ENCODE measurements at regions of chr10 and their contacts with region 1.

Region 1: DNA sequence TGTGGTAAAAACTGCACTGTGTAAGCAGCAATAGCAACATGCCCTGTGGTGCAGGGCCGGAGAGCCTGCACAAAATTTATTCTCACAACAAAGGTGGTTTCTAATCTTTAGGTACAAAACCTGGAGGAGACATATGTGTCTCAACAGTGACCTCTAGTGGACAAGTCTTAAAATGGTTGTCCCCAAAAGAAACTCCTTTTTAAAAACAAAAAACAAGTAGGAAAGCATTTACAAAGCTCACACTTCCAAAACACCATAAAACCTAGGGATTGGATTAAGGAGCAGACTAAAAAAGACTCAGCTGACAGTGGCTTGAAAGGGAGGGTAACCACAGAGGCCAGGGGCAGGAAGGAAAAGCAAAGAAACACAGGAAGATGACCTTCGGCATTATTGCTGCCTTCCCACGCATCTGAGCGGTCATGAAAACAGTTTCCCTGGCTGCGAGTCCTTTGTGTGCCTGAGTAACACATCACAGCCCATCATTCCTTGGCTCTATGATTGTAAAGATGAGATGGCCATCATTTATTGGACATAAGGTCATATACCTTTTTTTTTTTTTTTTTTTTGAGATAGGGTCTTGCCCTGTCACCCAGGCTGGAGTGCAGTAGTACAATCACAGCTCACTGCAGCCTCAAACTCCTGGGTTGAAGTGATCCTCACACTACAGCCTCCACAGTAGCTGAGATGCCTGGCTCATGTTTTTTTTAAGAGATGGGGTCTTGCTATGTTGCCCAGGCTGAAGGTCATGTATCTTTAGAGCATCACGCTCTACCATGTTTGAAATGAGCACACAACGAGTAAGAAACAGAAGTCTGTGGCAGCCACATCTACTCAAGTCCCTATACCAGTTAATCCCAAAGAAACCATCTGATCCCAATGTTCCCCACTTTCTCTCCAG is 39.5 kb downstream of the RSU1 start:
- DNase-seq: peak; percentile 24 to 67 (median 31)
- H3K4me3 ChIP-seq: peak overlapping the region in 1 of 4 donors; percentile 31
- H3K27ac ChIP-seq: no peak overlapping the region
- H3K4me1 ChIP-seq: no peaks in the 10 kb centered on the region
- H3K27me3 ChIP-seq: no peaks in the 10 kb centered on the region
- CTCF ChIP-seq: peak; percentile 58 to 90 (median 74)
- POLR2A ChIP-seq: no peak

Region 2: DNA sequence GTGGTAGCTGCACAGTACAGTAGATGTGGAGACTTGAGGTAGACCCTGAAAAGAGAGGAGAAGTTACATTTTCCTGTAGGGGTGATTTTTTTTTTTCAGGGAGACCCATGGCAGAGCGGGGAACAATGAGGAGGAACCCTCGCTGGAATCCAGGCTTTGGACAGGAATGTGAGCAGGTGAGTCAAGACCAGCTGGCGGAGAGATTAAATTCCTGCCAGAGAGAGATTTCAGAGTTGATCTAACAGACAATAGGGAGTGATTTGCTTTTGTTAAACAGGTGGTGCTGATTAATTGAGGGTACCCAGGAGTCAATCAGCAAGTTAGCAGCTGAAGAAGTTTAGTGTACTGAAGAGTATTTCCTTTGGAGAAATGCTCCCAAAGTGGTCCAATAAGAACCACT is 875.8 kb before region 1 on chr10:
- intact Hi-C with region 1: loop called in 1 of 2 experiments (anchors 5 kb)
- DNase-seq: no peak
- H3K4me3 ChIP-seq: no peak overlapping the region
- H3K27ac ChIP-seq: no peak overlapping the region
- H3K4me1 ChIP-seq: no peaks in the 10 kb centered on the region
- H3K27me3 ChIP-seq: peaks cover 12% of the 10 kb centered on the region
- CTCF ChIP-seq: no peak
- POLR2A ChIP-seq: no peak

Region 3: GRCh38 chr10:16116404-16117304 is 661.1 kb before region 1 on chr10:
- intact Hi-C with region 1: loop called in 1 of 2 experiments (anchors 5 kb)
- DNase-seq: peak in 3 of 7 donors; percentile 14 to 24 (median 18)
- H3K4me3 ChIP-seq: no peak overlapping the region
- H3K27ac ChIP-seq: no peak overlapping the region
- H3K4me1 ChIP-seq: no peaks in the 10 kb centered on the region
- H3K27me3 ChIP-seq: no peaks in the 10 kb centered on the region
- CTCF ChIP-seq: peak in 5 of 6 experiments; percentile 7 to 43 (median 37)
- POLR2A ChIP-seq: no peak

Region 4: DNA sequence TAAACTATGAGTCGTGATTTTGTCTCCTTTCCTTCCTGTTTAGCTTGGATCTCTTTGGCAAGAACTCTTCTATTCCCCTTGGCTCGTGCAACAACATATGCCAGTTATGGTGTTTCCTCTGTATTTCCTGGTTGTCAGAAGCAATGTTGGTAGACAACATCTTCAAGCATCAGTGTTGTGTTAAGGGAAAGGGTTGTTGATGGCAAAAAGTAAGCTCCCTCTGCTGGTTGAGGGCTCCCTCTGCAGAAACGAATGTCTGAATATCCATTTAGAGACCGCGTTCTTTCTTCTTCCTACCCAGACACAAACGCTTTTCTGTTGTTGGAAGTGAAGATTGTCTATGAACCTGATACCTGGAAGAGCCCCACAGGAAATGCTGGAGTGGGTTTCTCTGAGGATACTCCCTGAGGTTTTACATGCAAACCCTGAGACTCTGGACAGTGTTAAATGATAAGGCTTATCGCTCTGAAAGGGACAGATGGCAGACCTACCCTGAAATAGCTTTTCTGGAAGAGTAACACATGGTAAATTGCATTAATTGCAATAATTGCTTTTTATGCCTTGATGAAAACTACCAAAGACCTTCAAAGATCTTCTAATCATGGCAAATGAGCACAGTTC is 232.5 kb before region 1 on chr10:
- intact Hi-C with region 1: no loop called
- DNase-seq: peak in 4 of 7 donors; percentile 10 to 24 (median 16)
- H3K4me3 ChIP-seq: no peak overlapping the region
- H3K27ac ChIP-seq: no peak overlapping the region
- H3K4me1 ChIP-seq: no peaks in the 10 kb centered on the region
- H3K27me3 ChIP-seq: no peaks in the 10 kb centered on the region
- CTCF ChIP-seq: peak; percentile 53 to 67 (median 60)
- POLR2A ChIP-seq: no peak

Region 5: GRCh38 chr10:16965740-16966447 is 188.2 kb after region 1 on chr10:
- intact Hi-C with region 1: no loop called
- DNase-seq: peak in 3 of 7 donors; percentile 17 to 44 (median 18)
- H3K4me3 ChIP-seq: no peak overlapping the region
- H3K27ac ChIP-seq: no peak overlapping the region
- H3K4me1 ChIP-seq: peaks cover 0 to 6% of the 10 kb centered on the region in 2 donors
- H3K27me3 ChIP-seq: no peaks in the 10 kb centered on the region
- CTCF ChIP-seq: no peak
- POLR2A ChIP-seq: no peak

Region 6: DNA sequence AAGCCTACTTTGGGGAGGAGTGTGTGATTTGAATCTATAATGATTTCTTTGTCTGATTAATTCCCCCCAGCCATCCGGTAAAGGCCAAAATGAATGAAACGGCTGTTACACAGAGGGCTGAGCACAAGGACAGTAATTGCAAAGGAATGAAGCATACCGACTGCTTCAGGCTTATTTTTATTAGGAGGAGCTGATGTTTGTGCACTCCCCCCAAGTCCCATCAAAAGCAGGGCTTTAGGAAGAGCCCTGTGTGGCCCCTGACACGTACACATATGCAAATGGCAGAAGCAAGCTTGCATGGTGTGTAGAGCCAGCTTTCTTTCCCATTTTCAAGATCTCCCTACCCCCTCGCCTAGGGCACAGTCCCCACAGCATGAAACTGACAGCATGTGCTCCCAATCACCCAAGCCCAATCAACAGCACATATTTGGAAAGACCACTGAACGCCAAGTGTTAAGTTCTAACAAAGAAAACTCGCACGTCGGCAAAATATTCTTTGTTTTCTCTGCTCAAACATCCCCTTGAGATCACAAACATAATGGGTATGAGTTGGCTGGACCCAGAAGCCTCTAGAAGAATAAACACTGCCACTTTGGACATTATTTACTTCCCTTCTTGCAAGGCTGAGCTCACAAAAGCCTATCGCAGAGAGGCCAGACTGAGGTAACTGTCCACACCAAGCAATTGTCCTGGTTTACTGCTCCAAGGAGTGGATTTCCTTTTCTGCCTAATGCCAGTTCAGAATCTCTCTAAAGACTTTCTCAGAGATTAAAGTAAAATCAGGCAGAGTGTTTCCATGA is 208.9 kb after region 1 on chr10:
- intact Hi-C with region 1: no loop called
- DNase-seq: no peak
- H3K4me3 ChIP-seq: no peak overlapping the region
- H3K27ac ChIP-seq: no peak overlapping the region
- H3K4me1 ChIP-seq: no peaks in the 10 kb centered on the region
- H3K27me3 ChIP-seq: no peaks in the 10 kb centered on the region
- CTCF ChIP-seq: no peak
- POLR2A ChIP-seq: no peak